ENCODE measurements at regions of chr5 and their contacts with region 1.

Region 1: GRCh38 chr5:32542216-32543059 is 42.9 kb upstream of the SUB1 start:
- DNase-seq: peak; percentile 97
- ATAC-seq: peak; percentile 69
- H3K4me3 ChIP-seq: peak overlapping the region; percentile 12; the same call in 1 of the 2 replicates
- H3K27ac ChIP-seq: peak overlapping the region; percentile 96
- H3K4me1 ChIP-seq: peaks cover 55% of the 10 kb centered on the region
- H3K27me3 ChIP-seq: no peaks in the 10 kb centered on the region
- CTCF ChIP-seq: no peak
- EP300 ChIP-seq: peak; percentile 94 to 96
- POLR2A ChIP-seq: 0 out of 2 replicates have a peak, but pooled peaks have one; percentile 39
- RAD21 ChIP-seq: peak; percentile 8; the same call in 1 of the 2 replicates

Region 2: DNA sequence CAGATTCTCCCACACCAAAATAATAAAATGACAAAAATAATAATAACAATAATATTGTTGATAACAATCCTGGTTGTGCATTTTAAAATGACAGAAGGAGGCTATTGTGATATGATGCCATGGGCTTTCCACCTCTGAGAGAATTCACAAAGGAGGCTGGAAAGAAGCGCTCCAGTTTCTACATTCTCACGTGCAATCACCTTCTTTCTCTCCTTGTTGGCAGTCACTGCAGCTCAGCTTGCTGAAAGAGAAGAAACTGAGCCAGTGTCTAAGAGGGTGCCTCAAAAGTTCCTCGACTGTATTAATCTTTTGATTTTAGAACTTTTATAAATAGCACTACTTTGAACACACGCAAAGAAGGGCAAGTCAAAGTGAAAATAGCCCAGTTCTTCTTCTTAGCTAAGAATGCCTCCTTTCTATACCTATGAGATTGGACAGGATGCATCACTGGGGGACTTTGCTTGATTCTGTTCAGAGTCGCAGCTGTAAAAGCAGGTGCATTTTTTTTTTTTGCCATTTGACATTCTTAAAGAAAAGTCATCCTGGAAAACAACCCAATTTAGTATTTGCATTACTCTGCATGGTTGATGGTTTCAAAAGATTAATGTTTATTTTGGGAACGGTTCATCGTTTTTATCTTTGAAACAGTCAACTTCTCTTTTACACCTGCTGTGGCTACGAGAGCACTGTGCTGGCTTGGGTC is 30.5 kb after region 1 on chr5:
- CTCF ChIA-PET with region 1: interaction called, 16 read pairs
- POLR2A ChIA-PET with region 1: interaction called, 9 read pairs
- RAD21 ChIA-PET with region 1: interaction called, 80 read pairs
- SMC1A ChIA-PET with region 1: interaction called, 505 read pairs
- in situ Hi-C with region 1: no loop called
- intact Hi-C with region 1: loop called (anchors 1 kb)
- DNase-seq: peak; percentile 91
- ATAC-seq: peak; percentile 82
- H3K4me3 ChIP-seq: 0 out of 2 replicates have a peak overlapping the region, but pooled peaks have one; percentile 50
- H3K27ac ChIP-seq: peak overlapping the region; percentile 79
- H3K4me1 ChIP-seq: peaks cover 58% of the 10 kb centered on the region
- H3K27me3 ChIP-seq: no peaks in the 10 kb centered on the region
- CTCF ChIP-seq: no peak; a peak in 1 of 6 replicates
- EP300 ChIP-seq: peak; percentile 92 to 95
- POLR2A ChIP-seq: no peak
- RAD21 ChIP-seq: peak; percentile 34